WTC11 (cell line): ENCODE measurements at regions of chr1 and their contacts with region 1.

Region 1: GRCh38 chr1:12658531-12659453 is 14.9 kb downstream of the AADACL4 start:
- DNase-seq: peak; percentile 85
- ATAC-seq: peak; percentile 92
- H3K4me3 Mint-ChIP-seq: no peak overlapping the region
- H3K27ac Mint-ChIP-seq: no peak overlapping the region
- H3K4me1 Mint-ChIP-seq: peaks cover 15% of the 10 kb centered on the region
- H3K27me3 Mint-ChIP-seq: peaks cover 16% of the 10 kb centered on the region
- CTCF ChIP-seq: peak; percentile 86

Region 2: DNA sequence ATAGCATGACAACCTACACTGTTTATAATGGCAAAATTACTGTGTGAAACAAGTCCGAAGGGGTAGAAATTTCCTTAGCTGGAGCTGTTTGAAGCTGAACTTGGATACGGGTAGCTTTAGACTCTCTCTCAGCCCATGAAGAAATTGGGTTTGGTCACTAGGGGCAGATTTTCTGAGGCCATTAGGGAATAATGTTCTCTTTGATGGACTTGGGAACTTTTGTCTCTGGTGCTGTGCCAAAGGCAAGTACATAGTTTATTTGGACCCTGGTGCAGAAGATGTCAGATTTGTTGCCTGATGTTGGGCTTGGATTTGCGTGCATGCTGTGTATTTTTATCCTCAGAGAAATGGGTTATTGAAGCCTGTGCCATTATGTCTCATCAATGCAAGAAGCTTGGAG is 319.4 kb before region 1 on chr1:
- CTCF ChIA-PET with region 1: interaction called, 11 read pairs
- POLR2A ChIA-PET with region 1: no interaction called
- DNase-seq: no peak
- ATAC-seq: peak; percentile 65
- H3K4me3 Mint-ChIP-seq: no peak overlapping the region
- H3K27ac Mint-ChIP-seq: no peak overlapping the region
- H3K4me1 Mint-ChIP-seq: peaks cover 25% of the 10 kb centered on the region
- H3K27me3 Mint-ChIP-seq: no peaks in the 10 kb centered on the region
- CTCF ChIP-seq: no peak

Region 3: GRCh38 chr1:12572506-12572905 is 86.3 kb before region 1 on chr1:
- CTCF ChIA-PET with region 1: no interaction called
- POLR2A ChIA-PET with region 1: no interaction called
- DNase-seq: no peak
- ATAC-seq: no peak
- H3K4me3 Mint-ChIP-seq: no peak overlapping the region
- H3K27ac Mint-ChIP-seq: no peak overlapping the region
- H3K4me1 Mint-ChIP-seq: no peaks in the 10 kb centered on the region
- H3K27me3 Mint-ChIP-seq: no peaks in the 10 kb centered on the region
- CTCF ChIP-seq: no peak

Region 4: DNA sequence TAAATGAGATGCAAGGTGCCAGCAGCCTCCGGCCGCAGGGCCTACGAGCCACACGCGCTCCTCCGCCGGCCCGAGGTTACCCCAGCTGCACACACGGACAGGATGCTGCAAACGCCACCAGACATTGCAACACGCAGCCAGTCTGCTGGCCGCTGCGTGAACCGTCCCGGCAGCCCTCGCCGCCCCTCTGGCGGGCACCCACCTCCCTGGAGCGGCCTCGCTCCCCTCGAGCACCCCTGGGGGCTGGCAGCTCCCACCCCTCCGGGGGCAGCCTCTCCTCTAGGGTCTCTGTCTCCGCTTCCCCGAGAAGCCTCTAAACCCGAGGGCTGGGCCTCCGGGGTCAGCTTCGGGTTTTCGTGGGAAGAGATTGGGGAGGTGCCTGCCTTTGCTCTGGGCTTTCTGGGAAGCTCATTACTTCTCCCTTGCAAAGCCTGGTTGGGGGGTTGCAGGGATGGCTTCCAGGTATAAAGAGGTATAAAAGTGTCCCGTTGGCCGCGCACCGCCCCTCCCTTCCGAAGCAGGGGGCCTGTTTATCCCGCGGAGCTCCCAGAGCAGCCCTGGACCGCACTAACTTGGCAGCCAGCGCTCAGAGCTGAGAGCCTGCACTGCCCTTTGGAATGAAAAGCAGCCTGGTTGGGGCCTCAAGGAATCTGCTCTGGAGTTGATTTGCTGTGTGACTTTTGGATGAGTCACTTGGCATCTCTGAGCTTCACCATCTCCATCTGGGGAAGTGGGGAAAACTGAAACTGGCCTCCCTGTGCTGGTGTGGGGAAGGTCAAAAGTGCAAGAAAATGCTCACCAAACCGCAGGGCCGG is 62.6 kb before region 1 on chr1:
- CTCF ChIA-PET with region 1: interaction called, 22 read pairs
- POLR2A ChIA-PET with region 1: no interaction called
- DNase-seq: peak; percentile 40
- ATAC-seq: peak; percentile 64
- H3K4me3 Mint-ChIP-seq: peak overlapping the region; percentile 61
- H3K27ac Mint-ChIP-seq: no peak overlapping the region
- H3K4me1 Mint-ChIP-seq: peaks cover 62% of the 10 kb centered on the region
- H3K27me3 Mint-ChIP-seq: peaks cover 5% of the 10 kb centered on the region; the same call in 1 of the 2 replicates
- CTCF ChIP-seq: no peak

Region 5: GRCh38 chr1:12604114-12604874 is 54.5 kb before region 1 on chr1:
- CTCF ChIA-PET with region 1: interaction called, 13 read pairs
- POLR2A ChIA-PET with region 1: no interaction called
- DNase-seq: no peak
- ATAC-seq: peak; percentile 21
- H3K4me3 Mint-ChIP-seq: no peak overlapping the region
- H3K27ac Mint-ChIP-seq: no peak overlapping the region
- H3K4me1 Mint-ChIP-seq: peaks cover 50% of the 10 kb centered on the region
- H3K27me3 Mint-ChIP-seq: no peaks in the 10 kb centered on the region; the same call in 1 of the 2 replicates
- CTCF ChIP-seq: no peak

Region 6: DNA sequence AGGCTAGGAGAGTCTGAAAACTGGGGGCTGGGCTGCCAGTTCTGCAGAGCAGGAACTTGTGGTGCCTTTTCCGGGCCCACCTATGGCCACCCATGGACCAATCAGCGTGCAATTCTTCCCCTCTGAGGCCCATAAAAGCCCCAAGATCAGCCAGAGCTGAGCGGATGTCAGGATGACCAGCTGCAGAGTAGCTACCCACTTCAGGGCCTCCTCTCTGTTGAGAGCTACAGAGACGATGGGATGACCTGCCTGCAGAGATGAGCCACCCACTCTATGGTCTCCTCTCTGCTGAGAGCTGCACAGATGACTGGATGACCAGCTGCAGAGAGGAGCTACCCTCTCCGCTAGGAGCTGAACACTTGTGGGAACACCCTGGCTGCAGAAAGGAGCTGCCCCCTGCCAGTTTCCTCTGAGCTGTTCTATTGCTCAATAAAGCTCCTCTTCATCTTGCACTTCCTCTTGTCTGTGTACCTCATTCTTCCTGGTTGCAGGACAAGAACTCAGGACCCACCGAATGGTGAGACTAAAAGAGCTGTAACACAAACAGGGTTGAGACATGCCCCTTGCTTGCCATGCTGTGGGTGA is 27.8 kb before region 1 on chr1:
- CTCF ChIA-PET with region 1: interaction called, 37 read pairs
- POLR2A ChIA-PET with region 1: interaction called, 4 read pairs
- DNase-seq: no peak
- ATAC-seq: no peak
- H3K4me3 Mint-ChIP-seq: no peak overlapping the region
- H3K27ac Mint-ChIP-seq: no peak overlapping the region
- H3K4me1 Mint-ChIP-seq: peaks cover 68% of the 10 kb centered on the region
- H3K27me3 Mint-ChIP-seq: no peaks in the 10 kb centered on the region
- CTCF ChIP-seq: no peak

Region 7: DNA sequence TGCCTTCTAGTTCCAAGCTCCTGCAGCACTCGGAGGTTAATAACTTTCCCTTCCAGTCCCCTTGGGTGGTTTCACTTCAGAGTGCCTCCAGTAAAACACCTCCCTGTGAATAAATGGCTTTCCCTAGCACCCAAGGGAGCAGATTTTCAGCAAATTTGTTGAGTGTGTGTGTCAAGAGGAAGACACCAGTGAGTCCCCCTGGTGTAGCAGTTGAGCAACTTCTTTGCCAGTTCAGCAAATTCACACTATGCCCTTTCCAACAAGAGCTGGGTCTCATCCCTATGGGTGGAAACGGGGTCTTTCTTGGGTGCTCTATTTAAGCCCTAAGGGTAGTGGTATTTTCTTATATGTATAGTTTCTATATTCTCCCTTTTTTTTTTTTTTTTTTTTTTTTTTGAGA is 15.7 kb before region 1 on chr1:
- CTCF ChIA-PET with region 1: interaction called, 12 read pairs
- POLR2A ChIA-PET with region 1: no interaction called
- DNase-seq: no peak
- ATAC-seq: no peak
- H3K4me3 Mint-ChIP-seq: no peak overlapping the region
- H3K27ac Mint-ChIP-seq: no peak overlapping the region
- H3K4me1 Mint-ChIP-seq: peaks cover 7% of the 10 kb centered on the region; the same call in 1 of the 2 replicates
- H3K27me3 Mint-ChIP-seq: peaks cover 19% of the 10 kb centered on the region
- CTCF ChIP-seq: no peak